WTC11 (cell line): ENCODE measurements at regions of chr3 and their contacts with region 1.

Region 1: GRCh38 chr3:159775372-159775961 is 213.2 kb upstream of the IL12A start:
- DNase-seq: peak; percentile 44
- ATAC-seq: peak; percentile 99
- H3K4me3 Mint-ChIP-seq: no peak overlapping the region; the same call in 1 of the 2 replicates
- H3K27ac Mint-ChIP-seq: peak overlapping the region; percentile 89
- H3K4me1 Mint-ChIP-seq: peaks cover 22% of the 10 kb centered on the region
- H3K27me3 Mint-ChIP-seq: no peaks in the 10 kb centered on the region
- CTCF ChIP-seq: no peak

Region 2: GRCh38 chr3:159634483-159634882 is 141.0 kb before region 1 on chr3:
- CTCF ChIA-PET with region 1: no interaction called
- POLR2A ChIA-PET with region 1: no interaction called
- DNase-seq: no peak
- ATAC-seq: no peak
- H3K4me3 Mint-ChIP-seq: no peak overlapping the region
- H3K27ac Mint-ChIP-seq: no peak overlapping the region
- H3K4me1 Mint-ChIP-seq: peaks cover 30% of the 10 kb centered on the region
- H3K27me3 Mint-ChIP-seq: no peaks in the 10 kb centered on the region
- CTCF ChIP-seq: no peak

Region 3: DNA sequence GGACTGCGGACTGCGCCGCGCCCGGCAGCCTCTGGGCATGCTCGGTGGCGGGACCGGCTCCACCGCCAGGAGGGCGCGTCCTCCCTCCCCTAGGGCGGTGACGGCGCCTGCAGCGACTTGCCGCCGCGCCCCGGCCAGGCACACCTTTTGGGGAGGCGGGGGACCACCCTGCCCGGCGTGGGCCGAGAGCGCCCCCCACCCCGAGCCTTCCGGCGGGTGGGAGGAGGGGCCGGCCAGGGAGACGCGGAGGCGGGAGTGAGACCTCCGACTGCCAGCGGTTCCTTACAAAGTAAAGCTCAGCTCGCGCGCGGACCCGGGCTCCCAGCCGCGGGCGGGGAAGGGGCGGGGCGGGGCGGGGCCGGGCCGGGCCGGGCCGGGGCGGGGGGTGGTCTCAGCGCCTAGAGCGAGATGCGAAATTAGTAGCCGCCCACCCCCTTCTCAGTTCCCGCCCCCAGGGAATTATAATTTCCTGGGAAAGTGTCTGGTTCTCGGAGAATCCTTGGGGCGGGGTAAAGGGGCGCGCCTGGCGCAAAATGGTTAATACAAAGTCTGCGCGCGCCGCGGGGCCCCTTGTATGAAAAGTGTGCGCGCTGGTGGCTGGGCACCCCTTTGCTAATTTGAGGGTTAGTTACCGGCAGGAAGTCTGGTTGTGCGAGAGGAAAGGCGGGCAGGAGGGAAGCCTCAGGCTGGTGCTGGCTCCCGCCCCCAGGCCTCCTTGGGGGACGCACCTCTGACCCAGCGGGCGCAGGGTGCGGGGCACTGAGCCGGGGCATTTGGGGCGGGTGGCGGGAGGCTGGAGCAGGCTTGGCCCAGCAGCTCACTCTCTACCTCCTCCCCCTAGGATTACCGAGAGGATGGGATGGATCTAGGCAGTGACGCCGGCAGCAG is 11.6 kb before region 1 on chr3:
- CTCF ChIA-PET with region 1: interaction called, 4 read pairs
- POLR2A ChIA-PET with region 1: interaction called, 12 read pairs
- DNase-seq: peak; percentile 81
- ATAC-seq: peak; percentile 58
- H3K4me3 Mint-ChIP-seq: peak overlapping the region; percentile 97
- H3K27ac Mint-ChIP-seq: peak overlapping the region; percentile 92; the same call in 1 of the 2 replicates
- H3K4me1 Mint-ChIP-seq: peaks cover 41% of the 10 kb centered on the region
- H3K27me3 Mint-ChIP-seq: peaks cover 17% of the 10 kb centered on the region
- CTCF ChIP-seq: no peak